HEK293T (cell line): ENCODE measurements at regions of chr1 and their contacts with region 1.

Region 1: DNA sequence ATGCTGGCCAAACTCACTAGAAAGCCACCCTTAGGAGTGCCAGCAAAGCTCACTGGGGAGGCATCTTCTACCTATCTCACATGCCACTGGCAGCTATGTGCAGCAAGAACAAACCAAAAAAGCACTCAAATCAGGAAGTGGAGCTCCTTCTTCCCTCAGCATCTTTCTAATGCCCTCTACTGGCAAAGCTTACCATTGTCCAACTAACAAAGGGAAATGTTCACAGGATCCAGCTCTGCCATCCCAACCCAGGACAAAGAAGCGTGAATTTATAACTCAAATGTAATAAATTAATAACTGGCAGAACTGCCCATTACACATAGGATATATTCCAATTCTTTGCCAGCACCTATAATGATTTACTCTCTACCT is 38.9 kb downstream of the LEPR start:
- DNase-seq: peak; percentile 63

Region 2: DNA sequence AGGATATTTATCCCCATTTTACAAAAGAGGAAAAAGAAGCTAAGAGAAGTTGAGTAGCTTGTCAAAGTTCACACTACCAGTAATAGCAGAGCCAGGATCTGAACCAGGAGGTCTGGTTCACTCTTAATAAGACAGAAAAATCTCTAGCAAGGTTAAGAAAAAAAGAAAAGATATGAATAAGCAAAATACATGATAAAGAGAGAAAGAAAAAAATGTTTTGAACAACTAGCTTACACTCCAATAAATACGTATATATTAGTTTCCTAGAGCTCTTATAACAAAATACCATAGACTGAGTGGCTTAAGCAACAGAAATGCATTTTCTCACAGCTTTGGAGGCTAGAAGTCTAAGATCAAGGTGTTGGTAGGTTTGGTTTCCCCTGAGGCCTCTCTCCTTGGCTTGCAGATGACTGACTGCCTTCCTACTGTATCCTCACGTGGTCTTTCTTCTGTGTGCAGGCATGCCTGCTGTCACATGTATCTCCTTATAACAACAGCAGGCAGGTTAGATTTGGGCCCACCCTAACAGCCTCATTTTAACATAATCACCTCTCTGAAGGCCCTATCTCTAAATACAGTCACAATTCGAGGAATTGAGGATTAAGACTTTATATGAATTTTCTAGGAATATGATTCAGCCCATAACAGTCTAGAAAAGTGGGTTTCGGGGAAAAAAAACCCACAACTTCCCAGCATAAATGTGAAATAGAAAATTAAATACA is 21.5 kb after region 1 on chr1:
- CTCF ChIA-PET with region 1: no interaction called
- POLR2A ChIA-PET with region 1: no interaction called
- DNase-seq: no peak

Region 3: DNA sequence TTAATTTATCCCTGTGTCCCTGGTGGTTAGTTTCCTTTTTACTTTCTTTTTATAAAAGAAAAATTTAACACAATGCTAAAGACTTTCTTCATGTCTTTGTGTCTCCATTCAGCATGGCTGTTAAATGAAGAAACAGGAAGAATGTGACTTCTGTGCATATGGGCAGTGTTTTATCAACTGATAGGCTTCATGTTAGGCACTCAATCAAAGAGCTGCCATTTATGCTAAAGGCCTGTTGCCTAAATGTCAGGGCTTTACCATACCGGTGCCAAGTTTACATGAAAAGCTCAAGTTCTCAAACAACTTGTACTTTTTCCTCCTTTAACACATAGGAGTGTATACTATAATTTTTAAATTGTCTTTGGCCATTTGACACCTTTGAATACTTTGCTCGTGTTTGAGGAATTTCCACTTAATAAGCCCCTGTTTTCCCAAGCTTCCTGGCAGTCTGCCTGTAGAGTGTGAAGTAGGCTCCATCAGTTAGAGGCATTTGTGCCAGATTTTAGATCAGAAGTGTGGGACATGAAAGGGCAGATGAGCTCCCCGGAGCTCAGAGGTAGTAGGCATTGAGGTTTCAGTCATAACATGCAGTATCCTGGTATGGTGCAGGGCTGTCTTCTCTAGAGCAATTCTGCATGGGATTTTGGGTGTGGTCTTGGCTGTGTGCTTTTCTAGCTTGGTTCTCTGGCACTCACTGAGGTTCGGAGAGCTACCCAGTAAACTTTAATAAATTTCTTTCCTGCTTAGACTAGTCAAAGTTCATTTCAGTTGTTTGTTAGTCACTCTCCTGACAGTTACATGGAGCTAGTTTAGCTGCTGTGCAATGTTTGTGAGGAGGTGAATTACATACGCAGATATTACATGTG is 80.1 kb after region 1 on chr1:
- CTCF ChIA-PET with region 1: interaction called, 10 read pairs
- POLR2A ChIA-PET with region 1: no interaction called
- DNase-seq: no peak